Right ventricle myocardium superior (tissue), 1 donor: ENCODE measurements at regions of chr14 and their contacts with region 1.

Region 1: GRCh38 chr14:88411039-88411438 is 25.6 kb downstream of the SPATA7 start:
- DNase-seq: no peak
- ATAC-seq: no peak

Region 2: GRCh38 chr14:88005978-88006851 is 404.8 kb before region 1 on chr14:
- intact Hi-C with region 1: loop called (anchors 10 kb)
- DNase-seq: no peak
- ATAC-seq: peak; percentile 63

Region 3: DNA sequence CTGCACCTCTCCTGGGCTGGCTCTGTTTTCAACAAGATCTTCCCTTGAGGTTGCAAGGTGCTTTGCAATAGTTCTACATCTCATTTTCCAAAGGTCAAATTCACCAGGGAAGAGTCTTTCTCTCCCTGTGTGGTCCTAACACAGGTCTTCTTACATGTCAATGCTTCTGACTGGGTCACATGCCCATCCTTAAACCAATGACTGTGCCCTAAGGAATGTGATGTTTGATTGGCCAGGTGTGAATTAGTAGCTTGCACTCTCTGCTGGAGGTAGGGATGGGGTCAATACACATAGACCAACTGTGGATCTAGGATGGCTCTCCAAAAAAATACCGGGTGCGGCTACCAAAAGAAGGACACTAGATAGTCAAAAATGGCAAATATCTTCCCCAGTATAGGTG is 68.1 kb before region 1 on chr14:
- intact Hi-C with region 1: no loop called
- DNase-seq: no peak
- ATAC-seq: no peak

Region 4: DNA sequence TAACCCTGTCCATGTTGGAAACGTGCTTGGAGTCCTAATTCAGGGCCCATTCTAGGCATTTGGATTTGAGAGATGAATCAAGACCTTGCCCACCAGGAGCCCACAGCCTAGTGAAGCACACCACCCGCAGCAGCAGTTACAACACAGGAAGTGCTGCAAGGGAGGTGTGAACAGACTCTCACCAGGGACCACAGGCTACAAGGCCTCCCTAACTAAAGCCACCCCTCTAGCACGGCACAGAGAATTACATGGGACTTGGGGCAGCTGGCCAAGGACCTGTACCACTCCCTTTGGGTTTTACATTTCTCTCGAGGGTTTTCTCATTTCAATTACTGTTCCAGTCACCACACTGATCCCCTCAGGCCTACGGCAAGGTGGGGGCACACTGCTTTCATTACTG is 1055.4 kb after region 1 on chr14:
- intact Hi-C with region 1: no loop called
- DNase-seq: no peak
- ATAC-seq: peak; percentile 42